Right ventricle myocardium superior (tissue), 1 donor: ENCODE measurements at regions of chr11 and their contacts with region 1.

Region 1: DNA sequence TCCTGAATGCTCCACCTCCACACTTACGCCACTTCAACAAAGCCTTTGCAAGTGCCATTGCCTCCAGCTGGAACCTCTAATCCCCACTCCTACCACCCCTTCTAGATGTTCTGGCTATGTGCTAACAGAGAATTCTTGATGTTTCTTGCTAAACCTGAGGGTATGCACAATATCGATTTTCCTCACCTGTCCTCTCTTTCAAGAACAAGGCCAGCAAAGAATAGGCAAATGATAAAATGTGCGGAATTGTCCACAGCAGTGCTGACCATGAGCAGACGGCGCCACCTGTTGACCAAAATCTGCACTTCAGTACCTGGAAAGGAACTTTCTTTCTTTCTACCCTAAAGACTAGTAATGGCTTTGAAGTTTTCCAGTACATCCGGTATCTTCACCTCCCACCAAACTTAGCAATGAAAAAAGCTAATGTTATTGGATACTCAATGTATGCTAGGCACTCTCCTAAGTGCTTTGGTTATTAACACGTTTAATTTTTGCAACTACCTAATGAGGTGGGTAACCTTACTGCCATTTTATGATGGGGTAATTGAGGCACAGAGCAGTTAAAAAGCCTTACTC is 3.4 kb downstream of the TIMM10 start:
- DNase-seq: peak; percentile 78
- ATAC-seq: peak; percentile 36

Region 2: GRCh38 chr11:57456960-57457642 is 70.0 kb before region 1 on chr11:
- intact Hi-C with region 1: loop called (anchors 2 kb)
- DNase-seq: peak; percentile 95
- ATAC-seq: peak; percentile 89

Region 3: DNA sequence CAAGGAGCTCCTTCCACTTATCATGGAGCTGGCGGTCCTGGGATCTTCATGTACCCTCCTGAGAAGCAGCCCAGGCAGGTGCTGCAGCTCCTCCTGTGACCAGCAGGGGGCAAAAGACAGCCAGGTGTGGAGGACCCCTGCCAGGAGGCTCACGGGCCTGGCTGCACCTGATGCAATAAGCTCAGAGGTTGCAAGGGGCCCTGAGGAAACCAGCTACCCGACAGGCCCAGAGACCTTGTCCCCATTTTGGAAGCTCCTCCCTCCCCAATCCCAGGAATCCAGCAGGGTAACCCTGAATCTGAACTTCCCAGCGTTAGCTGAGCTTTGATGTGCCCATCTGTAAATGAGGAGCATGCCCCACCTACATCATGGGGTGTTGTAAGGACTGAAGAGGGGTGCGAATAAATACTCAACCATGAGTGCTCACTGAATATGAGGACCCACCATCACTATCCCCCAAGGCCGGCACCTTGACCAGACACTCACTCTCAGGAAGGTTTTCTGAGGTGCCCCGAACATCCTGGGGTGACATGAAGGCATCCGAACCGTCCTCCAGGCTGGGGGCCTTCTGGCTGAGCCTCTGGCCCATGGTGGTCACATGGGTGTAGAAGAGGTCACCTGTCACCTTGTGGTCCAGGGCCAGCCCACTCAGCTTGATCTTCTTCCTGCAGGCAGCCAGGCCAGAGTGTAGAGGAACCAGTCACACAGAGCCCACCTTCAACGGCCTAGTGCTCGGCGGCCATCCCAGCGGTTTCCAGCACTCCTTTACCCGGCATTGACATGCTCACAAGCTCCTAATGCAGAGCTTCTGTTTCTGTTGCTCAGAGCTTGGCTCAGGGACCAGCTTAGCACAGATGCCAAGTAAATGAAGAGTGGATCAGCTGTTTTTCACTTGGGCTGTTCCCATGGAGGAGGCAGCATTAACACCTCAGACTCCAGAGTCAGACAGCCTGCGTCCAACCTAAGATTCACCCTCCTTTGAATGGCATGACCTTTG is 33.3 kb before region 1 on chr11:
- intact Hi-C with region 1: loop called (anchors 2 kb)
- DNase-seq: peak; percentile 74
- ATAC-seq: peak; percentile 85